ENCODE measurements at regions of chr6 and their contacts with region 1.

Region 1: GRCh38 chr6:32984605-32985389 is 16.4 kb downstream of the BRD2 start:
- DNase-seq: peak; percentile 98
- ATAC-seq: peak; percentile 84
- H3K4me3 Mint-ChIP-seq: no peak overlapping the region
- H3K27ac Mint-ChIP-seq: peak overlapping the region; percentile 68
- H3K4me1 Mint-ChIP-seq: peaks cover 18% of the 10 kb centered on the region
- H3K27me3 Mint-ChIP-seq: no peaks in the 10 kb centered on the region
- CTCF ChIP-seq: peak; percentile 92

Region 2: DNA sequence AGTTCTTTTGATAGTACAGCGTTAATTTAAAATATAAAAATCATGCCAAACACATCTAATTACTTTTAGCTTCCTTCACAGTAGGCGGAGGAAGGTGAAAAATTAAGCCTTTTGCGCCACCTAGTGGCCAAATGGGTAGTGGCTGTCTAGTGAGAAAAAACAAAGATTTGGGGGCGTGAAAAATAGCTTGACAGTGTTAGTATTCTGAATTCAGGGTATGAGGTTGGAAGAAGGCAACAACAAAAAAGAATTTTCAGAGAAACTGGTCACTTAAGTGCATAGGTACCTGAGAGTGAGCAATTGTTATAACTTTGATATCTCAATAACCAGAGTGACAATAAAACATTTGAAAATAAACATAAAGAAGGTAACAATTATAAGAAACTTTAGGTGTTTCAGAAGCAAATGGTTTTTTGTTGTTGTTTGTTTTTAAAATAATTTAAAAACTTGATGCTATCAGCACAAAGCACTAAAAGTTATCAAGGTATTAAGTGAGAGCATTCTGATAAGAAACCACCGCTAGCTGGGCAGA is 116.5 kb before region 1 on chr6:
- CTCF ChIA-PET with region 1: interaction called, 53 read pairs
- POLR2A ChIA-PET with region 1: no interaction called
- intact Hi-C with region 1: no loop called
- DNase-seq: peak; percentile 95
- ATAC-seq: peak; percentile 78
- H3K4me3 Mint-ChIP-seq: no peak overlapping the region
- H3K27ac Mint-ChIP-seq: no peak overlapping the region
- H3K4me1 Mint-ChIP-seq: peaks cover 32% of the 10 kb centered on the region
- H3K27me3 Mint-ChIP-seq: no peaks in the 10 kb centered on the region
- CTCF ChIP-seq: peak; percentile 92

Region 3: GRCh38 chr6:32906539-32906938 is 78.3 kb before region 1 on chr6:
- CTCF ChIA-PET with region 1: interaction called, 20 read pairs
- POLR2A ChIA-PET with region 1: interaction called, 3 read pairs
- intact Hi-C with region 1: no loop called
- DNase-seq: no peak
- ATAC-seq: no peak
- H3K4me3 Mint-ChIP-seq: no peak overlapping the region
- H3K27ac Mint-ChIP-seq: no peak overlapping the region
- H3K4me1 Mint-ChIP-seq: no peaks in the 10 kb centered on the region
- H3K27me3 Mint-ChIP-seq: peaks cover 5% of the 10 kb centered on the region
- CTCF ChIP-seq: no peak

Region 4: DNA sequence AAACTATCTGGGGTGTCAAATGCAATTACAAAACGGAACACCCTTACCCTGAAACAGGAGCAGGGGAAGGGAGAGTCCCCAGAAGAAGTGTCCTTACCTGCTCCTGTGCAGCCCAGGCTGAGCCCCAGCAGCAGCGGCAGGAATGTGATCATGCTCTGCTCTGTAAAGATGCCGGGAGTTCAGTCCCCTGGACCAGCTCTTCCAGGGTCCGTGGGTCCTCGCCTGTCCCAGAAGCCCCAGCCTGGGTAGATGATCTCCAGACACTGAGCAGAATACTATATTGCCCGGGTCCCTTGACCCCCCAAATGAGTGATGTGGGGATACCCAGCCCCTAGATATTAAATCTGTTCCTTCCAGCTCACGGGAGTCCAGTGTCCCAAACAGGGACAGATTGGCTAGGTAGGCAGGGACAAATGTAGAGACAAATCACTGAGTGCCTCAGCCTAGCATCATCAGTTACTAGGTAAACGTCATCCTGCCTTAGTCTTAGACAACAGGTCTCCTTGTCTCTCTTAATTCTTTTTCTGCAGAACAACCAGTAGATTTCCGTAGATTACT is 44.1 kb before region 1 on chr6 and contains the start of gene HLA-DMB:
- CTCF ChIA-PET with region 1: interaction called, 364 read pairs
- POLR2A ChIA-PET with region 1: interaction called, 392 read pairs
- intact Hi-C with region 1: no loop called
- DNase-seq: peak; percentile 69
- ATAC-seq: peak; percentile 76
- H3K4me3 Mint-ChIP-seq: peak within 1 kb of the TSS; percentile 77
- H3K27ac Mint-ChIP-seq: peak within 1 kb of the TSS; percentile 97
- H3K4me1 Mint-ChIP-seq: peaks cover 64% of the 10 kb centered on the region
- H3K27me3 Mint-ChIP-seq: no peaks in the 10 kb centered on the region
- CTCF ChIP-seq: no peak
- total RNA-seq, gene HLA-DMB: 3.5 to 3.6 TPM

Region 5: DNA sequence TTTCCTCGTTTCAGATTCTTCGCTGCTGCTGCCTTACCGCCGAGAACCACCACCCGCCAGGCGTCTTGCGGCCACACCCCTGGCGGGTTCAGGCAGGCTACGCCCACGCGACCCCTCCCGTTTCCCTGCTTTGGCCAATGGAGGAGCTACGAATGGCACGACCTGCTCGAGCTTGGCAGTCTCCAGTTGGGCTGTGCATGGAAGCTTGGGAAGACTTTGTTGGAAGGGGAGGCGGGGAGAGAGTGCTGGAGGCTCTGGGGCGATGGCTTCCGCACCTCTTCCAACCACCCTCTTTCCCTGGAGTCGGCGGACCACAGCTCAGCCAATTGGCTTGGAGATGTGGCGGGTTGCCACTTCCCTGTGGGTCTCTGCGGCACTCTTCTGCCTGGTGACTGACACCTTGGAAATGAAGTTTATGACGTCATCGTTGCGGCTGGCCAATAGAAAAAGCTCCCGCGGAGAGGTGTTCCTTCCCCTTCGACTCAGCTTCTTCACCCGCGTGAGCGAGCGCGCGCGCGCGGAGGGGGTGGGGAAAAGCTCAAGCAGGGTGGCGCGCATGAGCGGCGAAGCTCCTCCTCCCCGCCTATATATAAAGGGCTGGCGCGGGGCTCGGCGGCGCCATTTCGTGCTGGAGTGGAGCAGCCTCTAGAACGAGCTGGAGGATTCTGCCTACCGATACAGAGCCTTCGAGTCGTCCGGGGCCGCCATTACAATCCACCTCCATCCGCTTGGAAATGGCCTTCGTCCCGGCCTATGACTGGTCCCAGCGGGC is 13.0 kb before region 1 on chr6:
- CTCF ChIA-PET with region 1: interaction called, 122 read pairs
- POLR2A ChIA-PET with region 1: interaction called, 852 read pairs
- intact Hi-C with region 1: no loop called
- DNase-seq: peak; percentile 100
- ATAC-seq: peak; percentile 38
- H3K4me3 Mint-ChIP-seq: peak overlapping the region; percentile 95
- H3K27ac Mint-ChIP-seq: peak overlapping the region; percentile 99
- H3K4me1 Mint-ChIP-seq: peaks cover 23% of the 10 kb centered on the region
- H3K27me3 Mint-ChIP-seq: no peaks in the 10 kb centered on the region
- CTCF ChIP-seq: no peak